ENCODE measurements at regions of chr3 and their contacts with region 1.

Region 1: GRCh38 chr3:8239718-8240695 is 261.6 kb upstream of the LMCD1 start:
- DNase-seq: peak; percentile 50
- H3K4me3 ChIP-seq: no peak overlapping the region
- H3K27ac ChIP-seq: no peak overlapping the region
- H3K4me1 ChIP-seq: no peaks in the 10 kb centered on the region; a peak in 1 of 4 replicates
- H3K27me3 ChIP-seq: no peaks in the 10 kb centered on the region
- CTCF ChIP-seq: peak; percentile 84
- EP300 ChIP-seq: no peak
- RAD21 ChIP-seq: peak; percentile 71

Region 2: GRCh38 chr3:8223766-8224165 is 16.2 kb before region 1 on chr3:
- CTCF ChIA-PET with region 1: interaction called, 45 read pairs
- POLR2A ChIA-PET with region 1: no interaction called
- DNase-seq: peak; percentile 59
- H3K4me3 ChIP-seq: no peak overlapping the region
- H3K27ac ChIP-seq: peak overlapping the region in 1 of 2 experiments; percentile 53; a peak in 2 of 4 replicates
- H3K4me1 ChIP-seq: peaks cover 0 to 9% of the 10 kb centered on the region in 2 experiments; a peak in 2 of 4 replicates
- H3K27me3 ChIP-seq: no peaks in the 10 kb centered on the region
- CTCF ChIP-seq: no peak
- EP300 ChIP-seq: peak in 1 of 2 experiments; percentile 57; a peak in 1 of 4 replicates
- RAD21 ChIP-seq: peak; percentile 52; the same call in 1 of the 2 replicates

Region 3: GRCh38 chr3:8254489-8254888 is 14.5 kb after region 1 on chr3:
- CTCF ChIA-PET with region 1: interaction called, 17 read pairs
- POLR2A ChIA-PET with region 1: no interaction called
- DNase-seq: no peak
- H3K4me3 ChIP-seq: no peak overlapping the region
- H3K27ac ChIP-seq: no peak overlapping the region
- H3K4me1 ChIP-seq: peaks cover 2 to 8% of the 10 kb centered on the region in 2 experiments; a peak in 2 of 4 replicates
- H3K27me3 ChIP-seq: no peaks in the 10 kb centered on the region
- CTCF ChIP-seq: no peak
- EP300 ChIP-seq: no peak
- RAD21 ChIP-seq: no peak

Region 4: GRCh38 chr3:8301728-8302462 is 61.9 kb after region 1 on chr3:
- CTCF ChIA-PET with region 1: interaction called, 11 read pairs
- POLR2A ChIA-PET with region 1: no interaction called
- DNase-seq: peak; percentile 35
- H3K4me3 ChIP-seq: no peak overlapping the region; a peak in 1 of 4 replicates
- H3K27ac ChIP-seq: no peak overlapping the region
- H3K4me1 ChIP-seq: peaks cover 4 to 7% of the 10 kb centered on the region in 2 experiments; a peak in 2 of 4 replicates
- H3K27me3 ChIP-seq: no peaks in the 10 kb centered on the region
- CTCF ChIP-seq: peak; percentile 74
- EP300 ChIP-seq: no peak
- RAD21 ChIP-seq: peak; percentile 79

Region 5: DNA sequence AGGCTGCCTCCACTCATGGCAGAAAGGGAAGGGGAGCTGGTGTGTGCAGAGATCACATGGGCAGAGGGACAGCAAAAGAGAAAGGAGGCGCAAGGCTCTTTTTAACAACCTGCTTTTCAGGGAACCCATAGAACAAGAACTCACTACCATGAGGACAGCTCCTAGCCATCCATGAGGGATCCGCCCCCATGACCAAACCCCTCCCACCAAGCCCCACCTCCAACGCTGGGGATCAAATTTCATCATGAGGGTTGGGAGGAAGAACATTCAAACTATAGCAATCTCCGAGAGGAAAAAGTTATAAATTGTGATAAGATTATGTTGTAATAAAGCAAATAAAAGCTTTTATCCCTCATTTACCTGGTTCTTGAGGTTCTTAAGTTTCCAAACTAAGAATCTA is 177.0 kb after region 1 on chr3:
- CTCF ChIA-PET with region 1: interaction called, 12 read pairs
- POLR2A ChIA-PET with region 1: no interaction called
- DNase-seq: no peak
- H3K4me3 ChIP-seq: 0 out of 4 replicates have a peak overlapping the region, but pooled peaks of 1 of the 2 experiments have one; percentile 30
- H3K27ac ChIP-seq: no peak overlapping the region
- H3K4me1 ChIP-seq: peaks cover 0 to 18% of the 10 kb centered on the region in 2 experiments; a peak in 2 of 4 replicates
- H3K27me3 ChIP-seq: no peaks in the 10 kb centered on the region
- CTCF ChIP-seq: no peak
- EP300 ChIP-seq: no peak
- RAD21 ChIP-seq: no peak

Region 6: DNA sequence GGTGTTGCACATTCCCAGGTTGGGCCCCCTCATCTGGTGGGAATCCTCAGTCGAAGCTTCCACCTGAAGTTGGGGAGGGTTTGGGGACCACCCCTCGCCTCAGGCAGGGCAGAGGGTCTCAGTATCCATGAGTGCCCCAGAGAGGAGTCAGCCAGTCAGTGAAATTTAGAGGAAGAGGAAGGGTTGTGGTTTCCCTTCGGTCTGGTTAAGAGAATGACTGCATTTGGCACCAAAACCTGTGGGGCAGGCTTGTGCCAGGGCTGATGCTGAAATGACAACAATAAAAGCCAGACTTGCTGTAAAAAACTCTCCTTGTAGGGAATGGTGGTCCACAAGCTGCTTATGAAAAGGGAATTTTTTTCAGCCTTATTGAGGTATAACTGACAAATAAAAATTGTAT is 284.2 kb after region 1 on chr3:
- CTCF ChIA-PET with region 1: no interaction called
- POLR2A ChIA-PET with region 1: no interaction called
- DNase-seq: no peak
- H3K4me3 ChIP-seq: no peak overlapping the region
- H3K27ac ChIP-seq: no peak overlapping the region
- H3K4me1 ChIP-seq: peaks cover 0 to 21% of the 10 kb centered on the region in 2 experiments; a peak in 2 of 4 replicates
- H3K27me3 ChIP-seq: no peaks in the 10 kb centered on the region
- CTCF ChIP-seq: no peak
- EP300 ChIP-seq: no peak
- RAD21 ChIP-seq: no peak